ENCODE measurements at regions of chr11 and their contacts with region 1.

Region 1: GRCh38 chr11:13152736-13153533 is 124.7 kb upstream of the BMAL1 start:
- DNase-seq: no peak
- ATAC-seq: peak; percentile 50; the same call in 2 of the 3 replicates
- H3K4me3 ChIP-seq: no peak overlapping the region
- H3K27ac ChIP-seq: no peak overlapping the region
- H3K4me1 ChIP-seq: no peaks in the 10 kb centered on the region
- H3K27me3 ChIP-seq: no peaks in the 10 kb centered on the region
- CTCF ChIP-seq: peak in 1 of 3 experiments; percentile 54; a peak in 2 of 6 replicates
- EP300 ChIP-seq: no peak
- POLR2A ChIP-seq: no peak
- RAD21 ChIP-seq: no peak

Region 2: DNA sequence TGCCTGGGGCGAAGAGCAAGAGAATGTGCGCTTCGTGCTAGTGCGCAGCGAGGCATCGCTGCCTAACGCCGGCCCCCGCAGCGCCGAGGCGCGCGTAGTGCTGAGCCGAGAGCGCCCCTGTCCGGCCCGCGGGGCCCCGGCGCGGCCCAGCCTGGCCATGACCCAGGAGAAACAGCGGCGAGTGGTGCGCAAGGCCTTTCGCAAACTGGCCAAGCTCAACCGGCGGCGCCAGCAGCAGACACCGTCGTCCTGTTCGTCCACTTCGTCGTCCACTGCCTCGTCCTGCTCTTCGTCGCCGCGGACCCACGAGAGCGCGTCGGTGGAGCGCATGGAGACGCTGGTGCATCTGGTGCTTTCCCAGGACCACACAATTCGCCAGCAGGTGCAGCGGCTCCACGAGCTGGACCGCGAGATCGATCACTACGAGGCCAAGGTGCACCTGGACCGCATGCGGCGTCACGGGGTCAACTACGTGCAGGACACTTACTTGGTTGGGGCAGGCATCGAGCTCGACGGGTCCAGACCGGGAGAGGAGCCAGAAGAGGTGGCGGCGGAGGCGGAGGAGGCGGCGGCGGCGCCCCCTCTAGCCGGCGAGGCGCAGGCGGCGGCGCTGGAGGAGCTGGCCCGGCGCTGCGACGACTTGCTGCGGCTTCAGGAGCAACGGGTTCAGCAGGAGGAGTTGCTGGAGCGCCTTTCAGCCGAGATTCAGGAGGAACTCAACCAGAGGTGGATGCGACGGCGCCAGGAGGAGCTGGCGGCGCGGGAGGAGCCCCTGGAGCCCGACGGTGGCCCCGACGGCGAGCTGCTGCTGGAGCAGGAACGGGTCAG is 142.8 kb before region 1 on chr11:
- CTCF ChIA-PET with region 1: interaction called, 12 read pairs
- POLR2A ChIA-PET with region 1: interaction called, 3 read pairs
- RAD21 ChIA-PET with region 1: interaction called, 3 read pairs
- SMC1A ChIA-PET with region 1: interaction called, 10 read pairs
- in situ Hi-C with region 1: no loop called
- intact Hi-C with region 1: loop called (anchors 5 kb)
- DNase-seq: no peak
- ATAC-seq: no peak
- H3K4me3 ChIP-seq: no peak overlapping the region
- H3K27ac ChIP-seq: no peak overlapping the region
- H3K4me1 ChIP-seq: no peaks in the 10 kb centered on the region
- H3K27me3 ChIP-seq: peaks cover 0 to 4% of the 10 kb centered on the region in 2 experiments; a peak in 3 of 4 replicates
- CTCF ChIP-seq: no peak; a peak in 1 of 6 replicates
- EP300 ChIP-seq: no peak
- POLR2A ChIP-seq: no peak
- RAD21 ChIP-seq: no peak

Region 3: DNA sequence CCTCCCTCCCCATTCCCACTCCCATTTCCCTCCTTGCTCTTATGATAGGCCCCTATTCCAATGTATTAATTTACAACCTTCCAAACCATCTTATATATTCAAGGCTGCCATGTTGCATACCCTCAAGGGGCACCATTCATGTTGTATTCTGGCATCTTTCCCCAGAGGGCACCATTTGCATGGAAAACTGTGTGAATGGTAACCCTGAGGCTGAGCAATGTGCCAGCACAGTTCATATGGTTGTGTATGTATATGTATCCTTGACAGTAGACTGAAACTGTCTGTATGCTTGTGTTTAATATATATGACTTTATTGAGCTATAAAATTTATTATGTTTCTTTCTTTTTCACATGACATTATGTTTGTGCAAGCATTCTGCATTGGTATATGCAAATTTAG is 136.5 kb before region 1 on chr11:
- CTCF ChIA-PET with region 1: interaction called, 12 read pairs
- POLR2A ChIA-PET with region 1: interaction called, 3 read pairs
- RAD21 ChIA-PET with region 1: interaction called, 4 read pairs
- SMC1A ChIA-PET with region 1: interaction called, 10 read pairs
- in situ Hi-C with region 1: no loop called
- intact Hi-C with region 1: loop called (anchors 5 kb)
- DNase-seq: no peak
- ATAC-seq: no peak; the same call in 2 of the 3 replicates
- H3K4me3 ChIP-seq: no peak overlapping the region
- H3K27ac ChIP-seq: no peak overlapping the region
- H3K4me1 ChIP-seq: no peaks in the 10 kb centered on the region
- H3K27me3 ChIP-seq: no peaks in the 10 kb centered on the region
- CTCF ChIP-seq: peak in 1 of 3 experiments; percentile 15; a peak in 1 of 6 replicates
- EP300 ChIP-seq: no peak
- POLR2A ChIP-seq: no peak
- RAD21 ChIP-seq: no peak

Region 4: GRCh38 chr11:13140028-13140870 is 12.7 kb before region 1 on chr11:
- CTCF ChIA-PET with region 1: interaction called, 3 read pairs
- POLR2A ChIA-PET with region 1: interaction called, 3 read pairs
- RAD21 ChIA-PET with region 1: no interaction called
- SMC1A ChIA-PET with region 1: interaction called, 12 read pairs
- in situ Hi-C with region 1: no loop called
- intact Hi-C with region 1: no loop called
- DNase-seq: peak; percentile 57
- ATAC-seq: peak; percentile 85
- H3K4me3 ChIP-seq: no peak overlapping the region
- H3K27ac ChIP-seq: no peak overlapping the region
- H3K4me1 ChIP-seq: no peaks in the 10 kb centered on the region
- H3K27me3 ChIP-seq: no peaks in the 10 kb centered on the region; a peak in 1 of 4 replicates
- CTCF ChIP-seq: no peak
- EP300 ChIP-seq: peak in 1 of 2 experiments; percentile 9; a peak in 1 of 4 replicates
- POLR2A ChIP-seq: no peak
- RAD21 ChIP-seq: no peak

Region 5: GRCh38 chr11:13620063-13620462 is 467.1 kb after region 1 on chr11:
- CTCF ChIA-PET with region 1: no interaction called
- POLR2A ChIA-PET with region 1: no interaction called
- RAD21 ChIA-PET with region 1: no interaction called
- SMC1A ChIA-PET with region 1: no interaction called
- in situ Hi-C with region 1: no loop called
- intact Hi-C with region 1: no loop called
- DNase-seq: no peak
- ATAC-seq: no peak
- H3K4me3 ChIP-seq: no peak overlapping the region
- H3K27ac ChIP-seq: no peak overlapping the region
- H3K4me1 ChIP-seq: no peaks in the 10 kb centered on the region
- H3K27me3 ChIP-seq: no peaks in the 10 kb centered on the region
- CTCF ChIP-seq: no peak
- EP300 ChIP-seq: no peak
- POLR2A ChIP-seq: no peak
- RAD21 ChIP-seq: no peak